Calu3 (cell line): ENCODE measurements at regions of chr11 and their contacts with region 1.

Region 1: DNA sequence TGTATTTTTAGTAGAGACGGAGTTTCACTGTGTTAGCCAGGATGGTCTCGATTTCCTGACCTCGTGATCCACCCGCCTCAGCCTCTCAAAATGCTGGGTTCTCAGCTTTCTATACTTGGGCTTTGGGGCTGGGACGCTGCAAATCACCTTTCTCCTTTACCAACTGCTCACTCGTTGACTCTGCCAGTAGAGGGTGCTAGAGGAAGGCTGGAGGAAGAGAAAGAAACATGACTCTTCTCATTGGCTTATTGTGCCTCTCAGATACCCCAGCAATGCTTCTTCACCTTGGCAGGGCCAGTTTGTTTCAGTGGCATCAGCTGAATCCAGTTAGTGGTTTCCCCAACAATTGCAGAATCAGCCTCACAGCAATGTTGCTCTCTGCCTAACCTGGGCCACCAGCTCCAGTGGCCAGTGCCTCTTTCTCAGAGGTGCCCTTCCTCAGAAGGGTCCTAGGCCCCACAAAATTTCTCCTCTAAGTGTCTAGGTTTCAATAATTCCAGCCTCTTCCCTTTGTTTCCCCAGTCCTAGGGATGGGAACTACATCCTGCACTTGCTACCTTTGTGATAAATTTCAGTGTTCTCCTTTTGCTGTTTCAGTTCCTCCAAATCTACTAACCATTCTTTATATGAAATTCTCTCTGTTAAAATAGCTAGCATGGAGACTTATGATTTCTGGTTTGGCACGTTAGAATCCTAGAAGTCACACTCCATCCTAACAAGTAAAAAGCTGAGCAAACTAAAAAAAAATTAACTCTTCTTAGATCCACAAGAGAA is 71.5 kb upstream of the VSTM5 start:
- DNase-seq: peak; percentile 59
- H3K4me3 Mint-ChIP-seq: no peak overlapping the region
- H3K27ac Mint-ChIP-seq: no peak overlapping the region
- H3K4me1 Mint-ChIP-seq: no peaks in the 10 kb centered on the region
- H3K27me3 Mint-ChIP-seq: peaks cover 23% of the 10 kb centered on the region
- CTCF ChIP-seq: peak; percentile 59

Region 2: DNA sequence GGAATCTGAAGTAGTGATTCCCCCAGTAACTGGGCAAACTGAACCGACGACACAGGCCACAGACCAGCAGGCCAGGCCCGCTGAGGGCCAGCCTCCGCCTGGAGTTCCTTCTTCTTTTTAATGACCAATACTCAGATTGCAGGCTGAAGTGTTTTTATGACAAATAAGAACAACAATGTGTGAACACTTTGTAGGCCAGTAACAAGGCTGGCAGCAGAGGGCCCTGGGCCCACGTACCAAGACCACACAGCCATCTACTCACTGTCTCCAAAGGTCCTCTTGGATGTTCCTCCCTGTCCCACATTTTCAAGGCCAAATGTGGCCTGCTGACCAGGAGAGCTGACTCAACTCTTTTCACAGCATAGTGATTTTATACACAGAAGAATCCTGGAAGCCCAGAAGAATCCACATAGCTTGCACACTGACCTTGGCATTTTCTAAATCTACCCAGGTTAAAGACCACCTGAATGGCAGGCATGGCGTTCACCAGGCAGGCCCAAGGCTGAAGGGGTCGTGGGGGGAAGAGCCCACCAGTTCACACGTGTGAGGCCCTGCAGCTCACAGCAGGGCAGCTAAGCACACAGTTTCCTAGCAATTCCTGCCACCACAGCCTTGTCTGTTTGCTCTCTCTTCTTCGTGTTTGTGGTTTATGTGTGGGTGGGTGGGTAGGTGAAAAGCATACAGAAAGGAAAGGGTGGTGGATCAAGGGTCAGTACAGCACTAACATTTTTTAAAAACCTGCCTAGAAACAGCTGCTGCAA is 392.0 kb before region 1 on chr11:
- CTCF ChIA-PET with region 1: no interaction called
- intact Hi-C with region 1: no loop called
- DNase-seq: no peak
- H3K4me3 Mint-ChIP-seq: no peak overlapping the region
- H3K27ac Mint-ChIP-seq: no peak overlapping the region
- H3K4me1 Mint-ChIP-seq: peaks cover 28% of the 10 kb centered on the region
- H3K27me3 Mint-ChIP-seq: no peaks in the 10 kb centered on the region
- CTCF ChIP-seq: no peak

Region 3: GRCh38 chr11:94046796-94047195 is 124.9 kb after region 1 on chr11:
- CTCF ChIA-PET with region 1: no interaction called
- intact Hi-C with region 1: loop called (anchors 5 kb)
- DNase-seq: no peak
- H3K4me3 Mint-ChIP-seq: no peak overlapping the region
- H3K27ac Mint-ChIP-seq: no peak overlapping the region
- H3K4me1 Mint-ChIP-seq: peaks cover 10% of the 10 kb centered on the region
- H3K27me3 Mint-ChIP-seq: no peaks in the 10 kb centered on the region
- CTCF ChIP-seq: no peak

Region 4: DNA sequence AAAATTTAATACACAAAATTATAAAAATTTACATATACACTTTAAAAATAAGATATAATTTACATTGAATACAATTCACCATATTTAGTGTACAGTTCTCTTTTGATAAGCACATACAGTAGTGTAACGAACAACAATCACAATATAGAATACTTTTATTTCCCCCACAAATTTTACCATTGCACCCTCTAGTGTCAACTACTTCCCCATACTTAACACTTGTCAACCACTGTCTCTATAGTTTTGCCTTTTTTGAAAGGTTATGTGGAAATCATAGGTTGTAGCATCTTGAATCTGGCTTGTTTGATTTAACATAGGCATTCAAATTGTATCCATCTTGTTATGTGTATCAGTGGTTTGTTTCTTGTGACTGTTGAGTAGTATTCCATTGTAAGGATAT is 185.5 kb after region 1 on chr11:
- CTCF ChIA-PET with region 1: interaction called, 3 read pairs
- intact Hi-C with region 1: loop called (anchors 5 kb)
- DNase-seq: no peak
- H3K4me3 Mint-ChIP-seq: no peak overlapping the region
- H3K27ac Mint-ChIP-seq: no peak overlapping the region
- H3K4me1 Mint-ChIP-seq: no peaks in the 10 kb centered on the region
- H3K27me3 Mint-ChIP-seq: no peaks in the 10 kb centered on the region
- CTCF ChIP-seq: no peak

Region 5: GRCh38 chr11:94183886-94184264 is 262.0 kb after region 1 on chr11:
- CTCF ChIA-PET with region 1: interaction called, 3 read pairs
- intact Hi-C with region 1: loop called (anchors 5 kb)
- DNase-seq: peak; percentile 69
- H3K4me3 Mint-ChIP-seq: no peak overlapping the region
- H3K27ac Mint-ChIP-seq: no peak overlapping the region
- H3K4me1 Mint-ChIP-seq: no peaks in the 10 kb centered on the region
- H3K27me3 Mint-ChIP-seq: no peaks in the 10 kb centered on the region
- CTCF ChIP-seq: peak; percentile 65